ENCODE measurements at regions of chr1 and their contacts with region 1.

Region 1: DNA sequence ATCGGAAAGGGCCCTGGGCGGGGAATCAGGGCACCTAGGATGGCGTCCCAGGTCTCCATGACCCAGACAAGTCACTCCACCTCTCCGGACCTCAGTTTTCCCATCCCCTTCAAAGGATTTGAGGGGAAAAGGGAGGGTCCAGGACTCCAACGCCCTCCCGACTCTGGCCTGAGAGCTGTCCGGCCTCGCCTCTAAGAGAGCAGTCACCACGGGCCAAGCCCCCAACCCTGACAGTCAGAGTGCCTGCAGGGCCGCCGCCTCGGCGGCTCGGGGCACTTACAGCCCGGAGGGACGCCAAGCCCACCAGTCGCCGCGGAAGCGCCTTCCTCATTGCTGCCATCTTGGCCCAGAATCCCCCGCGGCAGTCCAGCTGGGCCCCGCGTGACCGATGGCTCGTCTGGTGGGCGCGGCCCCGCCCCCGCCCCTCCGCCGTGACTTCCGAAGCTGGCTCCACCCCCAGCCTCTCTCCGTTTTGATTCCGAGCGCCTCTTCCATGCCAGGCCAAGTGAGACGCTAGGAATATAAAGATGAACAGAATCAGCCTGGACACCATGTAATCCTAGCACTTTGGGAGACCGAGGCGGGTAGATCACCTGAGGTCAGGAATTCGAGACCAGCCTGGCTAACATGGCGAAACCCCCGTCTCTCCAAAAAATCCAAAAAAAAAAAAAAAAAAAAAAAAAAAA is at the start of gene HMGCL:
- DNase-seq: peak; percentile 80
- ATAC-seq: peak; percentile 94
- H3K4me3 ChIP-seq: peak within 1 kb of the TSS; percentile 90 to 100 (median 99)
- H3K27ac ChIP-seq: peak within 1 kb of the TSS; percentile 99
- H3K4me1 ChIP-seq: peaks cover 24% of the 10 kb centered on the region
- H3K27me3 ChIP-seq: no peaks in the 10 kb centered on the region; a peak in 1 of 5 replicates
- CTCF ChIP-seq: peak; percentile 9; the same call in 1 of the 2 replicates
- EP300 ChIP-seq: 0 out of 4 replicates have a peak, but pooled peaks of 1 of the 2 experiments have one; percentile 35
- POLR2A ChIP-seq: peak; percentile 86 to 95
- RAD21 ChIP-seq: no peak
- total RNA-seq, gene HMGCL: 21.3 and 30.0 TPM in 2 replicates

Region 2: GRCh38 chr1:23800400-23801337 is 24.6 kb before region 1 on chr1 and contains the start of gene GALE:
- CTCF ChIA-PET with region 1: no interaction called
- POLR2A ChIA-PET with region 1: interaction called, 52 read pairs
- in situ Hi-C with region 1: no loop called
- intact Hi-C with region 1: no loop called
- DNase-seq: peak; percentile 89
- ATAC-seq: peak; percentile 75
- H3K4me3 ChIP-seq: peak within 1 kb of the TSS; percentile 65 to 92 (median 90)
- H3K27ac ChIP-seq: peak within 1 kb of the TSS; percentile 95
- H3K4me1 ChIP-seq: peaks cover 66% of the 10 kb centered on the region
- H3K27me3 ChIP-seq: no peaks in the 10 kb centered on the region; a peak in 1 of 5 replicates
- CTCF ChIP-seq: no peak
- EP300 ChIP-seq: peak in 1 of 2 experiments; percentile 34; a peak in 1 of 4 replicates
- POLR2A ChIP-seq: peak in 1 of 2 experiments; percentile 59; a peak in 2 of 4 replicates
- RAD21 ChIP-seq: peak; percentile 60; the same call in 1 of the 2 replicates
- total RNA-seq, gene GALE: 85.2 and 86.6 TPM in 2 replicates

Region 3: DNA sequence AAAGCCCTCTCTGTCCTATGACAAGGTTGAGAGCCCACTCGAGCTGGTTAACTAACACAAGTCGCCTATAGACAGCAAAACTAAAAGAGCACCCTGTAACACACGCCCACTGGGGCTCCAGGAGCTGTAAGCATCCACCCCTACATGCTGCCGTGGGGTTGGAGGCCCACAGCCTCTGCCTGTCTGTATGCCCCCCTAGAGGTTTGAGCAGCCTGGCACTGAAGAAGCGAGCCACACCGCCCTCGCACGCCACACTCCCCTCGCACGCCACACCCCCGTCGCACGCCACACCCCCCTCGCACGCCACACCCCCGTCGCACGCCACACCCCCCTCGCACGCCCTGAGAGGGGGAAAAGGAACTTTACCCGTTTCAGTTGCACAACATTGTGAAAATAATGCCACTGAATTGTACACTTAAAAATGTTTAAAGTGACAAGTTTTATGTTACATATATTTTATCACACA is 13.2 kb after region 1 on chr1:
- CTCF ChIA-PET with region 1: no interaction called
- POLR2A ChIA-PET with region 1: interaction called, 12 read pairs
- in situ Hi-C with region 1: no loop called
- intact Hi-C with region 1: no loop called
- DNase-seq: peak; percentile 45
- ATAC-seq: peak; percentile 96
- H3K4me3 ChIP-seq: peak overlapping the region; percentile 47 to 71 (median 71)
- H3K27ac ChIP-seq: no peak overlapping the region
- H3K4me1 ChIP-seq: peaks cover 22% of the 10 kb centered on the region
- H3K27me3 ChIP-seq: peaks cover 0 to 6% of the 10 kb centered on the region in 2 experiments; a peak in 3 of 5 replicates
- CTCF ChIP-seq: 0 out of 2 replicates have a peak, but pooled peaks have one; percentile 6
- EP300 ChIP-seq: no peak
- POLR2A ChIP-seq: no peak; a peak in 1 of 4 replicates
- RAD21 ChIP-seq: no peak